GM12878 (cell line): ENCODE measurements at regions of chr22 and their contacts with region 1.

Region 1: DNA sequence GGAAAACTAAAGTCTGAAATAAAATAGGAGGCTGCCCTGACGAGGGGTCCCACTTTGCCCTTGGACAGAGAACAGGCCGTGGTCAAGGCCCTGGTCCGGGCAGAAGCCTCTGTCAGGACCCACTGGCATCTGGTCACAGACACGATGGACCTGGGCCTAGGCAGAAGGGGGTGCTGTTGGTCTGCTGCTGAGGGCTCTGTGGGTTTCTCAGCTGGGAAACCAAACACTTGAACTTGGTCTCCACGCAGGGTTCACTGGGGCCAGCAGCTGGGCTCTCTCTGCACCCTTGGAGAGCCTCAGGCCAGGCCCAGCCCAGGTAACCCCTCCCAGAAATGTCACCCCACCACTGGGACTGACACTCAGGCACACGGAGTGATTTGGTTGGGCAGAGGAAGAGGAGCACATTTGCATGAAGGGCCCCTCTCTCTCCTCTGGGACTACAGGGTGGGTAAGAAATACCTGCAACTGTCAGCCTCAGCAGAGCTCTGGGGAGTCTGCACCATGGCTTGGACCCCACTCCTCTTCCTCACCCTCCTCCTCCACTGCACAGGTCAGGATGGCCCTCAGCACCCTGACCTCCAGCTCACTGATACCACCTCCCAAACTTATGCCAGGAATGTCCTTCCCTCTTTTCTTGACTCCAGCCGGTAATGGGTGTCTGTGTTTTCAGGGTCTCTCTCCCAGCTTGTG is 48.1 kb upstream of the TOP3B start:
- DNase-seq: peak; percentile 84
- ATAC-seq: peak; percentile 82
- H3K4me3 ChIP-seq: peak overlapping the region; percentile 66
- H3K27ac ChIP-seq: peak overlapping the region; percentile 80
- H3K4me1 ChIP-seq: peaks cover 38% of the 10 kb centered on the region
- H3K27me3 ChIP-seq: no peaks in the 10 kb centered on the region
- CTCF ChIP-seq: peak; percentile 85 to 93 (median 88)
- EP300 ChIP-seq: no peak; a peak in 1 of 4 replicates
- POLR2A ChIP-seq: peak; percentile 92
- RAD21 ChIP-seq: peak; percentile 84

Region 2: DNA sequence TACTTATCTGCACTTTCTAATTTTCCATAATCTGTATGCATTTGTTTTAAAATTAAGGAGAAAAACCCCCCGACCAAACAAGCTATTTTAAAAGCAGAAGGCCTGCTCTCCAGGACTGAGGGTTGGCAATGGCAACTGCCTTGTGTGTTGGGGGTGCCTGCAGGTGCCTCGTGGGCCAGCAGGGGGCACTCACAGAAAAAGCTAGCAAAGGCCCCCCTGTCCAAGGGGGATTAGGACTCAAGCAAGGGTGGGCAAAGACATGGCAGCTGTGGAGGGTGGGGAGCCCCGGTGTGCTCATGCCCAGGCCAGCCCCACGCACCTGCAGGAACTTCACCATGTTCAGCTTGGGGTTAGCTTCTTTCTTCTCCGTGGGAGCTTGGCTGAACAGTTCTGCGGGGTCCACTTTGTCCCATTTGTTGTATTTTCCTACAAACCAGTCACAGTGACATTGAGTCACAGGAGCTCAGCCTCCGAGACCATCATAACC is 58.3 kb before region 1 on chr22:
- CTCF ChIA-PET with region 1: interaction called, 11 read pairs
- POLR2A ChIA-PET with region 1: no interaction called
- RAD21 ChIA-PET with region 1: interaction called, 3 read pairs
- SMC1A ChIA-PET with region 1: interaction called, 3 read pairs
- in situ Hi-C with region 1: no loop called
- intact Hi-C with region 1: no loop called
- DNase-seq: no peak
- ATAC-seq: peak; percentile 92
- H3K4me3 ChIP-seq: no peak overlapping the region
- H3K27ac ChIP-seq: no peak overlapping the region
- H3K4me1 ChIP-seq: no peaks in the 10 kb centered on the region; the same call in 1 of the 2 replicates
- H3K27me3 ChIP-seq: no peaks in the 10 kb centered on the region
- CTCF ChIP-seq: peak; percentile 70 to 95 (median 94)
- EP300 ChIP-seq: no peak
- POLR2A ChIP-seq: no peak
- RAD21 ChIP-seq: peak; percentile 75

Region 3: GRCh38 chr22:22048981-22049531 is 18.4 kb after region 1 on chr22:
- CTCF ChIA-PET with region 1: interaction called, 156 read pairs
- POLR2A ChIA-PET with region 1: interaction called, 141 read pairs
- RAD21 ChIA-PET with region 1: interaction called, 229 read pairs
- SMC1A ChIA-PET with region 1: interaction called, 174 read pairs
- in situ Hi-C with region 1: no loop called
- intact Hi-C with region 1: no loop called
- DNase-seq: no peak
- ATAC-seq: no peak
- H3K4me3 ChIP-seq: no peak overlapping the region
- H3K27ac ChIP-seq: no peak overlapping the region
- H3K4me1 ChIP-seq: peaks cover 3% of the 10 kb centered on the region; the same call in 1 of the 2 replicates
- H3K27me3 ChIP-seq: no peaks in the 10 kb centered on the region
- CTCF ChIP-seq: no peak
- EP300 ChIP-seq: no peak
- POLR2A ChIP-seq: no peak
- RAD21 ChIP-seq: no peak

Region 4: DNA sequence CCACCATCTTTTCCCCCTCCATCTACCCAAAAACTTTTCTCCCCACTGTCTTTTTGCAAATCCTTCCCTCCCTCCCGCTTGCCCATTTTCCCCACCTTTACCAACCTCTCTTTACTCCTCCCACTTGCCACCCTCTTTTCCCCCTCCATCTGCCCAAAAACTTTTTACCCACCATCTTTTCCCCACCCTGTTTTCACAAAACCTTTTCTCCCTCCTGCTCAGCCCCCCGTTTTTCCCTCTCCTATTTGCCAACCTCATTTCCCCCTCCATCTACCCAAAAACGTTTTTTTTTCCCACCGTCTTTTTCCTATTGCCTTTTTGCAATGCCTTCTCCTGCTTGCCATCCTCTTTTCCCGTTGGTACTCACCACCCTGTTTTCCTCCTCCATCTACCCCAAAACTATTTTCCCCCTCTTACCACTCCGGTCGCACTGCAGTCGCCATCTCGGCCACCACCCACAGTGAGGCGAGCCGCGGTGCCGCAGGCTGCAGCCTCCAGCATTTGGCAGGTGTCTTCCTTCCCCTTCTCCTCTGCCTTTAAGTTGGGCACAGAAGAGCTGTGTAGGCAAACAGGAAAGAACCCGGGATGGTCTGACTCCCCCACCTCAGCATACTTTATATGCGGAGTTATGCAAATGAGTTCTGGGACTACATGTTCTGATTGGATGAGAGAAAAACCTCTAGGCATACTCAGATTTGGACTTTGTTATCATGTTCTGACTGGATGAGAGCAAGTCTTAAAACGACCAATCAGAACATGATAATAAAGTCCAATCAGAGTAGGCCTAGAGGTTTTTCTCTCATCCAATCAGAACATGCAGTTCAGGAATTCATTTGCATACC is 92.7 kb after region 1 on chr22:
- CTCF ChIA-PET with region 1: interaction called, 10 read pairs
- POLR2A ChIA-PET with region 1: interaction called, 3 read pairs
- RAD21 ChIA-PET with region 1: interaction called, 13 read pairs
- SMC1A ChIA-PET with region 1: interaction called, 4 read pairs
- in situ Hi-C with region 1: no loop called
- intact Hi-C with region 1: no loop called
- DNase-seq: no peak
- ATAC-seq: no peak
- H3K4me3 ChIP-seq: no peak overlapping the region
- H3K27ac ChIP-seq: no peak overlapping the region
- H3K4me1 ChIP-seq: no peaks in the 10 kb centered on the region
- H3K27me3 ChIP-seq: no peaks in the 10 kb centered on the region
- CTCF ChIP-seq: no peak
- EP300 ChIP-seq: no peak
- POLR2A ChIP-seq: no peak
- RAD21 ChIP-seq: no peak

Region 5: DNA sequence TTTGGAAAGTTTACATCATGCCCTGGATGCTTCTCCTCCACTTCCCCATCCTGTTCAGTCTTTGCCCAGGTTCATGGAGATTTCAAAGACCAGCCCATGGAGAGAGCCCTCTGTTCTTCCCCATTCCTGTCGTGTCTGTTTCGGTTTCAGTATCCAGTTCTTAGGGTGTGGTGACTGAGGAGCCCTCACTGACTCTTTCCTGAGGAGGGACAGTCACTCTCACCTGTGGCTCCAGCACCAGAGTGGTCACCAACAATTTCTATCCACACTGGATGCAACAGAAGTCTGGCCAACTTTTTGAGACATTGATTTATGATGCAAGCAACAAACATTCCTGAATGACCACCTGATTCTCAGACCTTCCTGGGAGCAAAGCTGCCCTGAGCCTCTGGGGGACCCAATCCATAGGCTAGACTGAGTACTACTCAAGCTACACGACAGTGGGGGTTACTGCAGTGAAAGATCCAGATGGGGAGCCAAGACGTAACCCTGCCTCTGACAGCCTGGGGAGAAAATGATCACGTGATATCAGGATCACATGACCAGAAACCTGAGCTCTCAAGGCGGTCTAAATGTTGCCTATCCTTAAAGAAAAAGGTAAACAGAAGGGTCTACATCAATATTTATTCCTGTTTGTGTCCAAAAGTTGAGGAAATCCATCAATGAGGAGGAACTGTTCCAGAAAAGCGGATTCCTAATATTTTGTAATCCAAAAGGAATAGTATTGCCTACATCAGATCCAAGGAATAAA is 137.7 kb after region 1 on chr22:
- CTCF ChIA-PET with region 1: interaction called, 13 read pairs
- POLR2A ChIA-PET with region 1: interaction called, 5 read pairs
- RAD21 ChIA-PET with region 1: interaction called, 19 read pairs
- SMC1A ChIA-PET with region 1: interaction called, 15 read pairs
- in situ Hi-C with region 1: no loop called
- intact Hi-C with region 1: no loop called
- DNase-seq: peak; percentile 57
- ATAC-seq: peak; percentile 74
- H3K4me3 ChIP-seq: peak overlapping the region; percentile 52; the same call in 1 of the 2 replicates
- H3K27ac ChIP-seq: peak overlapping the region; percentile 83
- H3K4me1 ChIP-seq: peaks cover 15% of the 10 kb centered on the region
- H3K27me3 ChIP-seq: no peaks in the 10 kb centered on the region
- CTCF ChIP-seq: no peak
- EP300 ChIP-seq: no peak
- POLR2A ChIP-seq: no peak; the same call in 1 of the 2 replicates
- RAD21 ChIP-seq: no peak

Region 6: DNA sequence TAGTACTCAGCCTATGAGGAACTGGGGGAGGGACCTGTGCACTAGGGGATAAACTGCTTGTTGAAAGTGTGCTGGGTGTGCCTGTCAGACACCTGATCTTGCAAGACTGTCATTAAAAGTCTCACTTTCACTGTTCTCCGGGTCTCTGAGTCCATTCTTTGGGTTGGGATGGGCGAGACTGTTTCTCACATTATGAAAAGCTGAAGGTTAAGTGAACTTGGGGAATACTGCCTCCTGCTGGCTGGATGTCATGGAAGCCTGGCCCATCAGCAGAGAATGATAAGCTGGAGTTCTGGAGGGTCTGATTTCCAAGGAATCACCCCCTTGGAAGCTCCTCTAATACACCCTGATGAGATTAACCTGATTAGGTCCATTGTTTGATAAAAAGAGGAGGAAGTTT is 204.9 kb after region 1 on chr22:
- CTCF ChIA-PET with region 1: interaction called, 5 read pairs
- POLR2A ChIA-PET with region 1: no interaction called
- RAD21 ChIA-PET with region 1: interaction called, 14 read pairs
- SMC1A ChIA-PET with region 1: interaction called, 5 read pairs
- in situ Hi-C with region 1: no loop called
- intact Hi-C with region 1: no loop called
- DNase-seq: peak; percentile 17
- ATAC-seq: peak; percentile 48; the same call in 2 of the 3 replicates
- H3K4me3 ChIP-seq: no peak overlapping the region
- H3K27ac ChIP-seq: no peak overlapping the region
- H3K4me1 ChIP-seq: no peaks in the 10 kb centered on the region
- H3K27me3 ChIP-seq: no peaks in the 10 kb centered on the region
- CTCF ChIP-seq: peak; percentile 51 to 55 (median 52); a peak in 5 of 6 replicates
- EP300 ChIP-seq: no peak
- POLR2A ChIP-seq: no peak
- RAD21 ChIP-seq: peak; percentile 62